GM12878 (cell line): ENCODE measurements at regions of chr12 and their contacts with region 1.

Region 1: GRCh38 chr12:17438141-17438540 is 651.9 kb downstream of the RERGL start:
- DNase-seq: no peak
- ATAC-seq: no peak
- H3K4me3 ChIP-seq: no peak overlapping the region
- H3K27ac ChIP-seq: no peak overlapping the region
- H3K4me1 ChIP-seq: no peaks in the 10 kb centered on the region
- H3K27me3 ChIP-seq: no peaks in the 10 kb centered on the region
- CTCF ChIP-seq: no peak
- EP300 ChIP-seq: no peak
- POLR2A ChIP-seq: no peak
- RAD21 ChIP-seq: no peak

Region 2: DNA sequence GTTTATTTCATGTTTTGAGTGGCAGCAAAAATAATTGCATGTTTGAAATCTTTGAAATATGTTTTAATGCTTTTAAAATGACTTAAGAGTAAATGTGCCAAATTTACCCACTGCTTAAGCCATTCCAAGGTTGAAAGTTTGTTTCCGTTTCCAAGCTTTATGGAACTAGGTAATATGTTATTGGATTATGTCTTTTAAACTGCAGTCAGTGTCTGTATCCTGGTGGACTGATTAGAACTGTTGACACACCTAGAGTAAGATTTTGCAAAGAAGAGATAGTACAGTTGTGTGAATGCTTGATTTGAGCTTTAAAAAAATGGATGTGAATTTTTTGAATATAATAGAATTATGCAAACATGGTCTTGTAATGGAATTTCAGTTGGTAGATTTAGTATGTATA is 1391.9 kb before region 1 on chr12:
- CTCF ChIA-PET with region 1: no interaction called
- POLR2A ChIA-PET with region 1: interaction called, 10 read pairs
- RAD21 ChIA-PET with region 1: no interaction called
- SMC1A ChIA-PET with region 1: no interaction called
- in situ Hi-C with region 1: no loop called
- intact Hi-C with region 1: no loop called
- DNase-seq: no peak
- ATAC-seq: no peak
- H3K4me3 ChIP-seq: no peak overlapping the region
- H3K27ac ChIP-seq: no peak overlapping the region
- H3K4me1 ChIP-seq: no peaks in the 10 kb centered on the region
- H3K27me3 ChIP-seq: no peaks in the 10 kb centered on the region
- CTCF ChIP-seq: no peak
- EP300 ChIP-seq: no peak
- POLR2A ChIP-seq: no peak
- RAD21 ChIP-seq: no peak

Region 3: DNA sequence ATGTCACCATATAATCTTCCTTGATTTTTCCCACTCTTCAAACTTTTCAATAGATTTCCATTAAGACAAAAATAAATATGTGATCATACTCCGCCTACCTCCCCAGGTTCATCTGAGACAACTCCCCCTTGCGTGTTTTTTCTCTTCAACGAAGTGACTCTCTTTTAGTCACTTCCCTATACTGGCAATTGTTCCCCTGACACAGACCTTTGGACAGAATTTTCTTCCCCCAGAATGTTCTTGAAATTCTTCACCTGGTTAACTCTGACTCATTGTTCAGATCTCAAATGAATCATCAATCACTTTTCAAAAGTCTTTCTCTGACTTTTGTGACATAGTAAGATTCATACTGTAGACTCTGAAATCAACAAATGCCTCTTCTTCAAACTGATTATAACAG is 104.9 kb before region 1 on chr12:
- CTCF ChIA-PET with region 1: no interaction called
- POLR2A ChIA-PET with region 1: no interaction called
- RAD21 ChIA-PET with region 1: no interaction called
- SMC1A ChIA-PET with region 1: no interaction called
- in situ Hi-C with region 1: no loop called
- intact Hi-C with region 1: no loop called
- DNase-seq: no peak
- ATAC-seq: no peak
- H3K4me3 ChIP-seq: no peak overlapping the region
- H3K27ac ChIP-seq: no peak overlapping the region
- H3K4me1 ChIP-seq: no peaks in the 10 kb centered on the region
- H3K27me3 ChIP-seq: no peaks in the 10 kb centered on the region
- CTCF ChIP-seq: no peak
- EP300 ChIP-seq: no peak
- POLR2A ChIP-seq: no peak
- RAD21 ChIP-seq: no peak